Prostate gland (tissue), 2 donors: ENCODE measurements at regions of chr1 and their contacts with region 1.

Region 1: GRCh38 chr1:94329986-94330385 is 88.2 kb upstream of the ABCD3 start:
- DNase-seq: no peak
- H3K4me3 ChIP-seq: no peak overlapping the region
- H3K27ac ChIP-seq: no peak overlapping the region
- H3K4me1 ChIP-seq: peaks cover 5% of the 10 kb centered on the region
- H3K27me3 ChIP-seq: no peaks in the 10 kb centered on the region
- CTCF ChIP-seq: peak in 3 of 4 experiments; percentile 7 to 27 (median 12)
- POLR2A ChIP-seq: no peak

Region 2: DNA sequence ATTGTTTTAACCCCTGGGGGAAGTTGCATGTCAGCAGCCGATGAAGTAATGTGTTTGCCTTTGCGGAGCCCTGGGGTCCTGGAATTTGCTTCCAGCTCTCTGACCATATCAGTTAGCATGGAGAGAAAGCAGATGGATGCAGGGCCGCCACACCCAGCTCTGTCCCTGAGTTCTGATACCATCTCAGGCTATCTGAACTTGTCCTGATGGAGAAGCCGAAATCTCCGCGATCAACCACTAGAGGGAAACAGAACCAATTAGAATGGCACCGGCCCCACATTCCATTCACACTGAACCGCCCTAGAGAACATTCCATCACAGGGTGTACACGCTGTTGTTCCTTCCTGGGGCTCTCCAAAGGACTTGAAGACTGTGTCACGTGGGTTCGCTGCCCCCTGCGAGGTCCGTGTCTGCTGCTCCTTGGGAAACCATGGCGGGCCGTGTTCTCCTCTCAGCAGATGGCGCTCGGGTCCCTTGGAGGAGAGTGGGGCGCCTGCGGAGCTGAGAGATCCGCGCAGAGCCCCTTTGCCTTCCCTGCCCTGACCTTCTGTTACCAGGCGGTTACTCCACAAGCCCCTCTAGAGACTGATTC is 284.4 kb before region 1 on chr1:
- intact Hi-C with region 1: loop called (anchors 5 kb)
- DNase-seq: peak; percentile 78
- H3K4me3 ChIP-seq: no peak overlapping the region
- H3K27ac ChIP-seq: peak overlapping the region; percentile 27 to 50
- H3K4me1 ChIP-seq: no peaks in the 10 kb centered on the region
- H3K27me3 ChIP-seq: no peaks in the 10 kb centered on the region
- CTCF ChIP-seq: peak; percentile 29 to 82 (median 69)
- POLR2A ChIP-seq: no peak

Region 3: DNA sequence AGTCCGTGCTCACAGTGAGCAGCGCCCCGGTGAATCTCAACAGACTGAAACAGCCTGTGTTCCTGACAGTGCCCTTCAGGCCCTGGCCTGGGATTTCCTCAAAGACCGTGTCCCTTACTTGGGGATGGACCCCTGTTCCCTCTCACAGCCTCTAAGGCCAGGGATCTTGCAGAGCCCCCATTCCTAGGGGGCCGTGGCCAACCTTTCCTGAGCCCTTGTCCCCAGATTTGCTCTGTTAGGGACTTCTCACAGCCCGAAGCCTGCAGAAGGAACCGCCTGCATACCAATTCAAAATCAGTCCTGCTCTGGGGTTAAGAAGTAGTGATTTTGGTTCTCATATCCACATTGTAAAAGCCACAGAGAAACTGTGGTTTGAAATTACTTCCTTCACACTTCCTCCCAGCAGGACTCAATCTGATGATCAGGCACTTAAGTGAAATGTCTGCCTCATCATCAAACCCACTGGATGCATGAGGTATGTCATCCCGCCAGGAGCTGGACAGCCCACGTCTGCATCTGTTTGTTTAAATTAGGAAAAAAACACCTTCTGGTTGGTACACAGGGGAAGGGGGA is 223.9 kb before region 1 on chr1:
- intact Hi-C with region 1: no loop called
- DNase-seq: no peak
- H3K4me3 ChIP-seq: no peak overlapping the region
- H3K27ac ChIP-seq: no peak overlapping the region
- H3K4me1 ChIP-seq: peaks cover 3% of the 10 kb centered on the region
- H3K27me3 ChIP-seq: no peaks in the 10 kb centered on the region
- CTCF ChIP-seq: no peak
- POLR2A ChIP-seq: no peak

Region 4: GRCh38 chr1:94971491-94971924 is 641.5 kb after region 1 on chr1:
- intact Hi-C with region 1: no loop called
- DNase-seq: no peak
- H3K4me3 ChIP-seq: no peak overlapping the region
- H3K27ac ChIP-seq: peak overlapping the region; percentile 24 to 31
- H3K4me1 ChIP-seq: no peaks in the 10 kb centered on the region
- H3K27me3 ChIP-seq: no peaks in the 10 kb centered on the region
- CTCF ChIP-seq: no peak
- POLR2A ChIP-seq: no peak